T-cell (primary cell): ENCODE measurements at regions of chr16 and their contacts with region 1.

Region 1: GRCh38 chr16:51393381-51394005 is 242.4 kb upstream of the SALL1 start:
- DNase-seq: no peak
- ATAC-seq: no peak
- H3K4me3 ChIP-seq: no peak overlapping the region
- H3K4me3 Mint-ChIP-seq: no peak overlapping the region
- H3K27ac ChIP-seq: no peak overlapping the region
- H3K27ac Mint-ChIP-seq: no peak overlapping the region
- H3K4me1 ChIP-seq: no peaks in the 10 kb centered on the region
- H3K4me1 Mint-ChIP-seq: no peaks in the 10 kb centered on the region
- H3K27me3 ChIP-seq: peaks cover 0 to 6% of the 10 kb centered on the region in 2 experiments
- H3K27me3 Mint-ChIP-seq: peaks cover 0 to 2% of the 10 kb centered on the region in 2 donors

Region 2: GRCh38 chr16:51408357-51408756 is 14.9 kb after region 1 on chr16:
- CTCF ChIA-PET with region 1: no interaction called
- POLR2A ChIA-PET with region 1: no interaction called
- DNase-seq: no peak
- ATAC-seq: no peak
- H3K4me3 ChIP-seq: no peak overlapping the region
- H3K4me3 Mint-ChIP-seq: no peak overlapping the region
- H3K27ac ChIP-seq: no peak overlapping the region
- H3K27ac Mint-ChIP-seq: no peak overlapping the region
- H3K4me1 ChIP-seq: no peaks in the 10 kb centered on the region
- H3K4me1 Mint-ChIP-seq: no peaks in the 10 kb centered on the region
- H3K27me3 ChIP-seq: no peaks in the 10 kb centered on the region
- H3K27me3 Mint-ChIP-seq: no peaks in the 10 kb centered on the region

Region 3: GRCh38 chr16:51450909-51451308 is 57.4 kb after region 1 on chr16:
- CTCF ChIA-PET with region 1: no interaction called
- POLR2A ChIA-PET with region 1: interaction called in 1 of 2 experiments, 10 read pairs
- DNase-seq: no peak
- ATAC-seq: no peak
- H3K4me3 ChIP-seq: no peak overlapping the region
- H3K4me3 Mint-ChIP-seq: no peak overlapping the region
- H3K27ac ChIP-seq: no peak overlapping the region
- H3K27ac Mint-ChIP-seq: no peak overlapping the region
- H3K4me1 ChIP-seq: no peaks in the 10 kb centered on the region
- H3K4me1 Mint-ChIP-seq: no peaks in the 10 kb centered on the region
- H3K27me3 ChIP-seq: no peaks in the 10 kb centered on the region
- H3K27me3 Mint-ChIP-seq: no peaks in the 10 kb centered on the region

Region 4: DNA sequence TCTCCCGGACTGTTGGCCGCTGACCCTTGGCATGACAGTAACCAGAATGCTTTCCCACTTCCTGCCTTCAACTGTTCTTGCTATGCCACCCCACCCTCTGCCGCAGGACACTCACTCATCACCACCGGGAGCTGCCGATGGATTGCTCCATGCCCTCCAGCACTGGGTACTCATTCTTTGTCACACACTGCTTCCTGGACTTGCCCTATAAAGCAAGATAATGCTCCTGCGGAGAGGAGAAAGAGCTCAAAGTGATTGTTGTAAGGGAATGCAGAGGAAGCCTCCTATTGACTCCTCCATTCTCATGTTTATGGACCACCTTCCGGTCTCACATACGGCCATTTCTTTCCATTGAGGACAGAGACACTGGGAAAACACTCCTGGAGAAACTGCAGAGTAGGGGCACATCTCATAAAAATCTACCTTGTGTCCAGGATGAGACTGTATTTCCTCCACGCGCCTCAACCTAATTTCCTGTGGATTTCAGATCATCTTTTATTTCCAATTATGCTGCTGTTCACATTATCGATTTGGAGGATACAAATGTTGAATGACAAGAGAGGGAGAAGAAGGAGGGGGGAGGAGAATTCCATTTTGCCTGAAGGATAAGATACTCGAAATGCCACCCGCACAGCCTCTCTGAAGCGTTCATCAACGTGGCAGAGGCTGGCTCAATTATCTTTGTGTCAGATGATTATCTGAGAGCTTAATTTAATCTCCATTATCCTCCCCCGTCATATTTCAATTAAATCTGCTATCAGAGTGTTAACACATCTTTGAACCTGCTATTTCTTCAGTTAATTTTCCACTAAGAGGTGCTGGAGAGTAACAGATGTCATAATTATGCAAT is 243.7 kb after region 1 on chr16:
- CTCF ChIA-PET with region 1: no interaction called
- POLR2A ChIA-PET with region 1: no interaction called
- DNase-seq: no peak
- ATAC-seq: no peak
- H3K4me3 ChIP-seq: no peak overlapping the region
- H3K4me3 Mint-ChIP-seq: no peak overlapping the region
- H3K27ac ChIP-seq: no peak overlapping the region
- H3K27ac Mint-ChIP-seq: no peak overlapping the region
- H3K4me1 ChIP-seq: no peaks in the 10 kb centered on the region
- H3K4me1 Mint-ChIP-seq: no peaks in the 10 kb centered on the region
- H3K27me3 ChIP-seq: no peaks in the 10 kb centered on the region
- H3K27me3 Mint-ChIP-seq: peaks cover 0 to 5% of the 10 kb centered on the region in 2 donors